BJ (cell line): ENCODE measurements at regions of chr3 and their contacts with region 1.

Region 1: DNA sequence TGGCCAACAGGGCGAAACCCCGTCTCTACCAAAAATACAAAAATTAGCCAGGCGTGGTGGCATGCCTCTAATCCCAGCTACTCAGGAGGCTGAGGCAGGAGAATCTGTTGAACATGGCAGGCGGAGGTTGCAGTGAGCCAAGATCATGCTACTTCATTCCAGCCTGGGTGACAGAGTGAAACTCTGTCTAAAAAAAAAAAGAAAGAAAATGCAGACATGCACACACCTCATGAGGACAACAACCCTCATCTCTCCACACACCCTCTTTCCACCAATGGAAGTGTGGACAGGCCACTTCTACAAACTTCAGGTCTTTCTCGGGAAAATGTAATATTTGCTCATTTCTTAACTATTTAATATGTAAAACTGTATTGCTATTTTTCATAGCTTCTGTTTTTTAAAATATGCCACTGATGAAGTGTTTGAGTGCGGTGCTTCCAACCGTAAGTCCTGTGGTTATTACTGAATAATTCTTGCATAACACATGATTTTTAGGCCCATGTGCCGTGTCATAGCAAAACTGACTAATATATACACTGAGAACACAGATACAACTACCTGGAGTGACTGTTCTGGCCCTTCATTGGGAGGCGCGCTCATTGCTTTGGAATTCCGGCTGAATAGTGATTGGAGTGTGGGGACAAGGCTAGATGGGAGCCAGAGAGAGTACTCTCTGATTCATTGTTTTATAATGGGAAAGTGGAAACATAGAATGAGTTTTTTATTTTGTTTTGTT is 23.1 kb downstream of the LRRC31 start:
- DNase-seq: peak; percentile 14
- H3K4me3 ChIP-seq: no peak overlapping the region
- H3K27me3 ChIP-seq: no peaks in the 10 kb centered on the region; the same call in 1 of the 2 replicates
- CTCF ChIP-seq: no peak

Region 2: DNA sequence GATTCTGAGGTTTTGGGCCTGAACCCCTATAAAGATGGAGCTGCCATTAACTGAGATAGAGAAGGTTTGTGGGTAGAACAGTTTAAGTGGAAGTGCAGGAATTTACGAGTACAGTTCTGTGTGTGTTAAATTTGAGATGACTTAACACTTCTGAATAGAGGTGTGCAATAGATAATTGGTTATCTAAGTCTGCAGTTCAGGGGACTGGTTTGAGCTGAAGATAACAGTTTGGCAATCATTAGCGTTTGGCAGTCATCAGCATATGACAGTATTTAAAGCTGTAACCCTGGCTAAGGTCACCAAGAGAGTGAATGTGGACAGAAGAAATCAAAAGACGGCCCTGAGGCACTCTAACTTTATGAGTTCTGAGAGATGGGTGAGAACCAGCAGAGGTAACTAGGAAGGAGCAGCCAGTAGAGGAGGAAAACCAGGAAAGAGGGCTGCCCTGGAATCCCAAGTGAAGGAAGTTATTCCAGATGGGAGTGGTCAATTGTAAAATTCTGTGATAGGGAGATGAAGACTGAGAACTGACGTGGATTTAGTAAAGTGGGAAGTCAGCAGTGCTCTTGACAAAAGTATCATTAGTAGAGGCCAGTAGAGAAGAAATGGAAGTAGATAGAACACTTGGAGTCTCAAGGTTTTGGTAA is 65.3 kb before region 1 on chr3:
- CTCF ChIA-PET with region 1: no interaction called
- POLR2A ChIA-PET with region 1: no interaction called
- DNase-seq: no peak
- H3K4me3 ChIP-seq: no peak overlapping the region
- H3K27me3 ChIP-seq: no peaks in the 10 kb centered on the region
- CTCF ChIP-seq: no peak

Region 3: DNA sequence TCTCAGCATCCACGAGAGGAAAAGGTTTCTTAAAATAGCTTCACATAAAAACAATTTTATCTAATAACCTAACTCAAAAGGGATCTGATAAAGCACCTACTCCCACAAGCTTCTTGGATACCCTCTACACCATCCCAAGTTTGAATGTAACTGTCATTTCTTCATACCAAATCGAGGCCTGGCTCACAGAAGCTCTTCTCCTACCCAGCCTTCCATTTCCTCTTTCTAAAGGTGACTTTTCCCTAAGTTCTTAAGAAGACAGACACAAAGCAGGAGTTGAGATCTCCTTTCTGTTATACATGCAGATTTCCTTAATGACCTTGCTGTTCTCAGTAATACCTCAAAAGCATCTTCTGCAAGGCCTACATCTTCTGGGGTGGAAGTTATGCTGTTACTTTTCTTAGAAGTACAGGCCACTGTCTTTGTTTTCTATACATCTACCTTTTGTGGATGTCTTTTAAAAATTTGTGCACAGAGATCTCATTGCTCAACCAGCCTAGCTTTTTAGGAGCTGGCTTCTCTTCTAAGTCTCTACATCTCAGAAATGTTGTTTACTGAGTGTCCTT is 37.3 kb before region 1 on chr3:
- CTCF ChIA-PET with region 1: no interaction called
- POLR2A ChIA-PET with region 1: interaction called, 11 read pairs
- DNase-seq: no peak
- H3K4me3 ChIP-seq: no peak overlapping the region
- H3K27me3 ChIP-seq: no peaks in the 10 kb centered on the region
- CTCF ChIP-seq: no peak